Tibial artery (tissue), 4 donors: ENCODE measurements at regions of chr2 and their contacts with region 1.

Region 1: GRCh38 chr2:156332534-156333273 is at the start of gene NR4A2:
- DNase-seq: peak; percentile 92 to 96
- H3K4me3 ChIP-seq: peak within 1 kb of the TSS; percentile 87 to 89
- H3K27ac ChIP-seq: peak within 1 kb of the TSS; percentile 99 to 100
- H3K4me1 ChIP-seq: peaks cover 0 to 6% (median 5%) of the 10 kb centered on the region in 4 donors
- H3K27me3 ChIP-seq: no peaks in the 10 kb centered on the region
- CTCF ChIP-seq: peak in 1 of 2 experiments; percentile 8

Region 2: DNA sequence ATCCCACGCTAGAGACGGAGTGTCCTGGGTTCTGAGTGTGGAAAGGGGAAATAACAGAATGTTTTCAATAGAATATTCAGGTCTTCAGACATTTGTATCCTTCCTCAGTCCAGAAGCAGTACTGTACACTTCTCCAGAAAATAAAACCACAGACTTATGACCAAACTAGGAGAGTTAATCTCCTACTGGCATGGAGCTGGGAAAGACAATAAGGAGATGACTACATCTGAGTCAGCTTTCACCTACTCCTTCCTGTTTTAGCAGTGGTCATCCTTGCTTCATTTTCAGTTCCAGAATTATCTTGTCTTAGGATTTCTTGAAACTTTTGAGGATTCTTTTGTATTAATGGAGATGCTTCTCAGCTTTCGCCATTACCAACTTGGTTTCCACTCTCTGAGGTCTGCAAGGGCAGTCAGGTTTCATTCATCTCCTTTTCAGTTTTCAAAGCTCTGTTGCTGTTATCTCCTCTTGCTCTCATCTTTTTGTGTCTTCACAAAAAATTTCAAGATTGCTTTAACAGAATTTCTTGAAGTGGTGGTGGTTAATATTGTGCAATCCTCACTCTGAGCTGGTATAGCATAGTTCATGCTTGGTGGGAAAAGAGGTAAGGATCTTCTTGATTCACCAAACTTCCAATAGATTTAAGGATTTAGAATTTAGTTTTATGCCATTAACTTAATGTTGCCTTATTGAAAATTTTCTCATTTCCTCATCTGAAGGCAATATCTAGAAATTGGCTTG is 23.5 kb after region 1 on chr2:
- intact Hi-C with region 1: no loop called
- DNase-seq: no peak
- H3K4me3 ChIP-seq: no peak overlapping the region
- H3K27ac ChIP-seq: no peak overlapping the region
- H3K4me1 ChIP-seq: no peaks in the 10 kb centered on the region
- H3K27me3 ChIP-seq: no peaks in the 10 kb centered on the region
- CTCF ChIP-seq: no peak

Region 3: GRCh38 chr2:156435715-156436496 is 103.2 kb after region 1 on chr2 and contains the start of gene GPD2:
- intact Hi-C with region 1: loop called (anchors 5 kb)
- DNase-seq: peak; percentile 92 to 97
- H3K4me3 ChIP-seq: peak within 1 kb of the TSS; percentile 66 to 81
- H3K27ac ChIP-seq: peak within 1 kb of the TSS; percentile 98 to 100
- H3K4me1 ChIP-seq: peaks cover 0 to 40% (median 33%) of the 10 kb centered on the region in 4 donors
- H3K27me3 ChIP-seq: no peaks in the 10 kb centered on the region
- CTCF ChIP-seq: peak in 1 of 2 experiments; percentile 20